ENCODE measurements at regions of chr6 and their contacts with region 1.

Region 1: GRCh38 chr6:43174263-43175112 is 3.4 kb downstream of the SRF start:
- H3K4me3 Mint-ChIP-seq: peak overlapping the region; percentile 79
- H3K27ac Mint-ChIP-seq: peak overlapping the region; percentile 95
- H3K4me1 Mint-ChIP-seq: peaks cover 56% of the 10 kb centered on the region
- H3K27me3 Mint-ChIP-seq: no peaks in the 10 kb centered on the region

Region 2: GRCh38 chr6:42960243-42961019 is 214.1 kb before region 1 on chr6 and contains the start of gene GNMT:
- intact Hi-C with region 1: no loop called
- H3K4me3 Mint-ChIP-seq: peak within 1 kb of the TSS; percentile 66
- H3K27ac Mint-ChIP-seq: no peak within 1 kb of the TSS
- H3K4me1 Mint-ChIP-seq: peaks cover 15% of the 10 kb centered on the region
- H3K27me3 Mint-ChIP-seq: peaks cover 32% of the 10 kb centered on the region

Region 3: DNA sequence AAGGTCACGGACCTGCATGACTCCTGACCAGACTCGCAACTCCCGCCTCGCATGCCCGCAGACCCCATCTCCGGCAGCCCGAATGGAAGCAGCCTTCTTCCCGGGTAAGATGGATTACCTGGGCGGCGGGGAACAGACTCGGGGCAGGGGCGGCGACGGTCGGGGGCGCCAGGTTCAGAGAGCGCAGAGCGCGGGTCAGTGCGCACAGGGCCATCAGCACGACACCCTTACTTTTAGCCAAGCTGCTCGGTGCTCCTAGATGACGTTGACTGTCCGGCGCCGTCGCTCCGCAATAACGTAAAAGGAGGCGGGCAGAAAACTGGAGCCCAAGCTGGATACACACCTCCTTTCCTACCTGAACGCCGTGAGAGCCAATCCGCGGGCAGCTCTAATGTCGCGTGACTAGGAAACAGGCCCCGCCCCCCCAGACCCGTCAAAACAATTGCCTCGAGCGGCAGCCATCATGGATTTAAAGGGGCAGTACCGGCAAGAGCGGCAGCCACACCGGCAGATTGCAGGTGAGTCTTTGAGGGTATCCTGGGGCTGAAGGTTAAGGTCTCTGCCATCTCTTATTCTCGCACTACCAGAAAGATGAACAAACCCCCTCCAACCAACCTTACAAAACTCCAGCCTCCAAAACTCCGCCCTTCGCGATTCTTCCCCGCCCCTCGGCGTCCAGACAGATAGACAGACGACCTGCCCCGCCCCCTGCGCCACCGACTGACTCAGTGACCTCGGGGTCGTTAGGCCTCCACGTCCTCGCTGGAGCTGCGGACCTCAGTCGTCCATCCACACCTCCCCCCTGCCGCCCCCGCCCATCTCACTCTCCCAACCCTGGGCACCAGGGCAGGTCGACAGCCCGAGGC is 115.1 kb before region 1 on chr6 and contains the starts of genes KLC4 and MRPL2:
- intact Hi-C with region 1: loop called (anchors 2 kb)
- H3K4me3 Mint-ChIP-seq: peak within 1 kb of the TSS; percentile 91
- H3K27ac Mint-ChIP-seq: peak within 1 kb of the TSS; percentile 97
- H3K4me1 Mint-ChIP-seq: peaks cover 29% of the 10 kb centered on the region
- H3K27me3 Mint-ChIP-seq: no peaks in the 10 kb centered on the region